Calu3 (cell line): ENCODE measurements at regions of chr2 and their contacts with region 1.

Region 1: GRCh38 chr2:227479865-227480475 is 8.0 kb downstream of the AGFG1 start:
- DNase-seq: no peak
- H3K4me3 Mint-ChIP-seq: no peak overlapping the region
- H3K27ac Mint-ChIP-seq: no peak overlapping the region
- H3K4me1 Mint-ChIP-seq: peaks cover 54% of the 10 kb centered on the region
- H3K27me3 Mint-ChIP-seq: no peaks in the 10 kb centered on the region
- CTCF ChIP-seq: peak; percentile 17

Region 2: GRCh38 chr2:227509824-227510619 is 30.1 kb after region 1 on chr2:
- CTCF ChIA-PET with region 1: interaction called, 3 read pairs
- intact Hi-C with region 1: loop called (anchors 5 kb)
- DNase-seq: no peak
- H3K4me3 Mint-ChIP-seq: no peak overlapping the region
- H3K27ac Mint-ChIP-seq: peak overlapping the region; percentile 75
- H3K4me1 Mint-ChIP-seq: peaks cover 75% of the 10 kb centered on the region
- H3K27me3 Mint-ChIP-seq: no peaks in the 10 kb centered on the region
- CTCF ChIP-seq: no peak

Region 3: GRCh38 chr2:227534714-227535113 is 54.7 kb after region 1 on chr2:
- CTCF ChIA-PET with region 1: interaction called, 4 read pairs
- intact Hi-C with region 1: loop called (anchors 10 kb)
- DNase-seq: no peak
- H3K4me3 Mint-ChIP-seq: no peak overlapping the region
- H3K27ac Mint-ChIP-seq: no peak overlapping the region
- H3K4me1 Mint-ChIP-seq: no peaks in the 10 kb centered on the region
- H3K27me3 Mint-ChIP-seq: no peaks in the 10 kb centered on the region
- CTCF ChIP-seq: no peak

Region 4: GRCh38 chr2:227684276-227684675 is 204.3 kb after region 1 on chr2:
- CTCF ChIA-PET with region 1: no interaction called
- intact Hi-C with region 1: no loop called
- DNase-seq: no peak
- H3K4me3 Mint-ChIP-seq: no peak overlapping the region
- H3K27ac Mint-ChIP-seq: no peak overlapping the region
- H3K4me1 Mint-ChIP-seq: no peaks in the 10 kb centered on the region
- H3K27me3 Mint-ChIP-seq: no peaks in the 10 kb centered on the region
- CTCF ChIP-seq: no peak

Region 5: GRCh38 chr2:227703280-227703732 is 223.3 kb after region 1 on chr2:
- CTCF ChIA-PET with region 1: no interaction called
- intact Hi-C with region 1: loop called (anchors 10 kb)
- DNase-seq: peak; percentile 33
- H3K4me3 Mint-ChIP-seq: no peak overlapping the region
- H3K27ac Mint-ChIP-seq: peak overlapping the region; percentile 70
- H3K4me1 Mint-ChIP-seq: peaks cover 42% of the 10 kb centered on the region
- H3K27me3 Mint-ChIP-seq: no peaks in the 10 kb centered on the region
- CTCF ChIP-seq: no peak